AG04449 (cell line): ENCODE measurements at regions of chr1 and their contacts with region 1.

Region 1: DNA sequence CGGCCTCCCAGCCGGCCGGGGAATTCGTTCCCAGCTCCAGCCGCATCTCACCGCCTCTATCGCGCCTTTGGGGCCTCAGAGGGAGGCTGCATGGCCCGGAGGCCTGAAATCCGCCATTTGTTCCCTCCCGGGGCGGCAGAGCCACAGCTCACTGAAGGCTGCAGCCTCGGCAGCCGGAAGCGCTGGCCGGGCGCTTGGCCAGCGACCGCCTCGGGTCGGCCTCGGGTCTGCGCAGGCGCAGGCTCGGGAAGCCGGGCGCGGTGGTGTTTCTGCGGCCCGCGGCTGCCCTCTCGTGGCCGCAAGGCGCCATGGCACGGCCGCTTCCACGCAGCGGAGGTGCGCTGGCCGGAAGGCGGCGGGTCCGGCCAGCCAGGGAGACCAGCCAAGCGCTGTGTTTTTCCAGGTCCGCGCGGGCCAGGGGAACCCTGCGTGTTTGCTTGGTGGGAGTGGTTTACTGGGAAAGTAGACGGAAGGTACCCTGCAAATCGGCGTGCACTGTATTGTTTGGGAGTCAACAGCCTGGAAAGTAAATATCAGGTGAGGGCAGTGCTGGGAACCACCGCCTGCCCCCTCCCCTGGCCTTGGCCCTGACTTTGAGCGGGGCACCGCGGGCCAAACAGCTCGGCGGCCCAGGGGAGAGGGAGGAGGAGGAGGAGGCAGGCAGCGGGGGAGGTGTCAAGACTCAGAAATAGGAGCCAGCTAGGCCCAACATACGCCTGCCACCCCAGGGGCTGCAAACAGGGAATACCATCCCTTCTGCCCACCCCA is 52.7 kb upstream of the CD34 start:
- DNase-seq: no peak
- H3K4me3 ChIP-seq: peak overlapping the region; percentile 61
- CTCF ChIP-seq: peak; percentile 96

Region 2: DNA sequence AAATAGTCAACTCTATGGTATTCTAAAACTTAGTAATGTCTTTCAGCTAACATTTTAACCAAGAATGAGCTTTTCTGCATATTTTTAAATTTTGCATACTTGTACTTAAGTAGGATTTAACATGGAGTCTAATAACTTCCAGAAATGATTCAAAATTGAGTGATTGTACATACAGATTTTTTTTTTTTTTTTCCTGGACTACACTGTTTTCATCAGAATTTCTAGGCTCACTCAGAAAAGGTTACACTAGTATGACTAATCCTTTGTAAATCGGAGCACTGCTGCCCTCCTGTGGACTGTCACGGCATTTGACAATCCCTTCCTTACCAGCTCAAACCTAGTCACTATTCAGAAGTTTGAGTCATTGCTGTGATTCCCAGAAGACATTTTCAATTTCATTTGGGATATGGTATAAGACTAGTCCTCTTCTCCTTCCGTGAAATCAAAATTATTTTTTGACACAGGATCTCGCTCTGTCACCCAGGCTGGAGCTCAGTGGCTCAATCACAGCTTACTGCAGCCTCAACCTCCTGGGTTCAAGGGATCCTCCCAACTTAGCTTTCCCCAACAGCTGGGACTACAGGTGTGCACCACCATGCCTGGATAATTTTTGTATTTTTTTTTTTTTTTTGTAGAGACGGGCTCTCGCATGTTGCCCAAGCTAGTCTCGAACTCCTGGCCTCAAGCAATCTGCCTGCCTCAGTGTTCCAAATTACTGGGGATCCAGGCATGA is 166.2 kb before region 1 on chr1:
- CTCF ChIA-PET with region 1: interaction called, 10 read pairs
- POLR2A ChIA-PET with region 1: no interaction called
- DNase-seq: peak; percentile 44
- H3K4me3 ChIP-seq: no peak overlapping the region
- CTCF ChIP-seq: peak; percentile 71

Region 3: GRCh38 chr1:207868774-207869721 is 94.6 kb before region 1 on chr1:
- CTCF ChIA-PET with region 1: interaction called, 93 read pairs
- POLR2A ChIA-PET with region 1: no interaction called
- DNase-seq: no peak
- H3K4me3 ChIP-seq: peak overlapping the region; percentile 67
- CTCF ChIP-seq: peak; percentile 76

Region 4: GRCh38 chr1:207941665-207942064 is 21.9 kb before region 1 on chr1:
- CTCF ChIA-PET with region 1: interaction called, 55 read pairs
- POLR2A ChIA-PET with region 1: no interaction called
- DNase-seq: no peak
- H3K4me3 ChIP-seq: no peak overlapping the region
- CTCF ChIP-seq: no peak

Region 5: DNA sequence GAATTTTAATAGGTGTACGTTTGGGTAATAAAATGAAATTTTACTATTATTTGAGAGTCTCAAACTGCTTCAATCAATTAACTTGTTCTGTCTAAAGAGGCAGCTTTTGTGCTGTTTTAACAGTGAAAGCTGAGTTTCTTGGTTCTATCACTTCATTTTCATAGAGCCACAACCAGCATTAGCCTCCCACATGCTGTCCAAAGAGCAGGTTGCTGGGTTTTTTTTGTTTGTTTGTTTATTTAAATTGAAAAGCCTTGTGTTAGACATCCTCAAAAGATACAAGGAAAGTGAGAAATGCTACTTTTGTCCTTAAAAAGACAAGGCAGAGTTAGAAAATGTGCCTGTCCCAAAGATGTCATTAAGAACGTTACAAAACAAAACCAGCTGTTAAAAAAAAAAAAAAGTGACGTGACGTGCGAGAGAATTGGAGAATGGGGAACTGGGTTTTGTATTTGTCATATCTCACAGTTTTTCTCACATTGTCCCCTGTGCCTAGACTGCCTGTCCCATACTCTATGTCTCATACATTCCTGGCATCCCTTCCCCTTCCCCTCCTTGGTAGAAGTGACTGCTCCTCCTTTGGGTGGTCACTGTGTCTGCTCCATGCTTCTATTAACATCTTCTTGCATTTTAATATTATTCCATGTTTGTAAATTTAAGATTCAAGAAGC is 10.4 kb after region 1 on chr1:
- CTCF ChIA-PET with region 1: interaction called, 29 read pairs
- POLR2A ChIA-PET with region 1: no interaction called
- DNase-seq: no peak
- H3K4me3 ChIP-seq: no peak overlapping the region
- CTCF ChIP-seq: no peak

Region 6: DNA sequence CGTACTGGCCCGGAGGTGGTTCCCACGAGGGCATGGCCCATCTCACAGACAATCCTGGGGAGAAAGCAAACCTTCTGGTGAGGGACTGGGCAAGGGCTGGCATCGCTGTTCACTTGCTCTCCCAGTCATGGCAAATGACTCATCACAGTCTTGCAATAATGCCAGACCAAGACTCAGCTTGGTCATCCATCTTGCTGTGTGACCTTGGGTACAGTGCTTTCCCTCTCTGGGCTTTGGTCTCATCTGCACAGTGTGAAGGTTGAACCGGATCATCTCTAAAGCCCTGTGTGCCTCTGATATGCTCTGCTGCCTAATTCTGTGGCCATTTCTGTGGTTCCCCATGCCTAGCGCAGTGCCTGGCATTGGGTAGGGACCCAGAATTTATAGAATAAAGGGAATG is 90.9 kb after region 1 on chr1:
- CTCF ChIA-PET with region 1: no interaction called
- POLR2A ChIA-PET with region 1: no interaction called
- DNase-seq: no peak
- H3K4me3 ChIP-seq: no peak overlapping the region
- CTCF ChIP-seq: no peak

Region 7: DNA sequence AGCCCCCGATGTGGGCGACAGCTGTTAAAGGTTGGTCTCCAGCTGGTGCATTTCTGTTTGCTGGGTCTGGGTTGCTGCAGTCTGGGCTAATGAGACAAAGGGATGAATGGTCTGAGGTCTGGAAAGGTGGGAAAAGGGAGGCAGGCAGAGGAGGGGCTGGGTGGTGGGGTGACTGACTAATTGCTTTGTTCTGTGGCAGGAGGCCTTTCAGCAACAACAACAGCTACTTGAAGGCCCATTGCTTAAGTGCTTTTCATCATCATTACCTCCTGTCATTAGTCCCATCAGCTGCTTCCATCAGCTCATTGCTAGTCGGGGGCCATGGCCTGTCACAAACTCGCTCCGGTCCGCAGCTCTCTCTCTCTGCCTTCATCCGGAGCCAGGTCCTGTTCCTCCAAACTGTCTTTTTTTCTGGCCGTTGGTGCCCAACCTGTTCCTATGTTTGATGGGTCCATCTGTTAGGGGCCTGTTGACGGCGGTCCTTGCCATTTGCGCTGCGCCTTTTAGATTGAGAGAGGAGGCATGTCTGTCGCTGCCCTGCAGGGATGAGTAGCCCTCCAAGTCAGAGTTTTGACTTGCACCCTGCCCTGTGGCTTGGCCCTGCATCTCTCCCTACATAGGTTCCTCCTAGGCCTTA is 386.2 kb after region 1 on chr1:
- CTCF ChIA-PET with region 1: no interaction called
- POLR2A ChIA-PET with region 1: no interaction called
- DNase-seq: no peak
- H3K4me3 ChIP-seq: no peak overlapping the region
- CTCF ChIP-seq: no peak